GM12878 (cell line): ENCODE measurements at regions of chr13 and their contacts with region 1.

Region 1: GRCh38 chr13:111976474-111977178 is 90.3 kb upstream of the SOX1 start:
- DNase-seq: no peak
- ATAC-seq: no peak
- H3K4me3 ChIP-seq: no peak overlapping the region
- H3K27ac ChIP-seq: no peak overlapping the region
- H3K4me1 ChIP-seq: no peaks in the 10 kb centered on the region
- H3K27me3 ChIP-seq: no peaks in the 10 kb centered on the region
- CTCF ChIP-seq: no peak
- EP300 ChIP-seq: no peak
- POLR2A ChIP-seq: no peak
- RAD21 ChIP-seq: no peak

Region 2: GRCh38 chr13:111929036-111929616 is 47.5 kb before region 1 on chr13:
- CTCF ChIA-PET with region 1: no interaction called
- POLR2A ChIA-PET with region 1: no interaction called
- RAD21 ChIA-PET with region 1: no interaction called
- SMC1A ChIA-PET with region 1: no interaction called
- in situ Hi-C with region 1: loop called (anchors 5 kb)
- intact Hi-C with region 1: no loop called
- DNase-seq: no peak
- ATAC-seq: no peak
- H3K4me3 ChIP-seq: no peak overlapping the region
- H3K27ac ChIP-seq: no peak overlapping the region
- H3K4me1 ChIP-seq: no peaks in the 10 kb centered on the region
- H3K27me3 ChIP-seq: no peaks in the 10 kb centered on the region
- CTCF ChIP-seq: no peak
- EP300 ChIP-seq: no peak
- POLR2A ChIP-seq: no peak
- RAD21 ChIP-seq: no peak